ENCODE measurements at regions of chr5 and their contacts with region 1.

Region 1: GRCh38 chr5:36239370-36240293 is 2.1 kb downstream of the NADK2 start:
- DNase-seq: no peak
- H3K4me3 ChIP-seq: peak overlapping the region in 3 of 8 donors; percentile 58 to 80 (median 75)
- H3K27ac ChIP-seq: peak overlapping the region in 7 of 8 donors; percentile 47 to 98 (median 96)
- H3K4me1 ChIP-seq: peaks cover 13 to 62% (median 48%) of the 10 kb centered on the region in 6 donors
- H3K27me3 ChIP-seq: no peaks in the 10 kb centered on the region
- CTCF ChIP-seq: no peak
- POLR2A ChIP-seq: no peak

Region 2: DNA sequence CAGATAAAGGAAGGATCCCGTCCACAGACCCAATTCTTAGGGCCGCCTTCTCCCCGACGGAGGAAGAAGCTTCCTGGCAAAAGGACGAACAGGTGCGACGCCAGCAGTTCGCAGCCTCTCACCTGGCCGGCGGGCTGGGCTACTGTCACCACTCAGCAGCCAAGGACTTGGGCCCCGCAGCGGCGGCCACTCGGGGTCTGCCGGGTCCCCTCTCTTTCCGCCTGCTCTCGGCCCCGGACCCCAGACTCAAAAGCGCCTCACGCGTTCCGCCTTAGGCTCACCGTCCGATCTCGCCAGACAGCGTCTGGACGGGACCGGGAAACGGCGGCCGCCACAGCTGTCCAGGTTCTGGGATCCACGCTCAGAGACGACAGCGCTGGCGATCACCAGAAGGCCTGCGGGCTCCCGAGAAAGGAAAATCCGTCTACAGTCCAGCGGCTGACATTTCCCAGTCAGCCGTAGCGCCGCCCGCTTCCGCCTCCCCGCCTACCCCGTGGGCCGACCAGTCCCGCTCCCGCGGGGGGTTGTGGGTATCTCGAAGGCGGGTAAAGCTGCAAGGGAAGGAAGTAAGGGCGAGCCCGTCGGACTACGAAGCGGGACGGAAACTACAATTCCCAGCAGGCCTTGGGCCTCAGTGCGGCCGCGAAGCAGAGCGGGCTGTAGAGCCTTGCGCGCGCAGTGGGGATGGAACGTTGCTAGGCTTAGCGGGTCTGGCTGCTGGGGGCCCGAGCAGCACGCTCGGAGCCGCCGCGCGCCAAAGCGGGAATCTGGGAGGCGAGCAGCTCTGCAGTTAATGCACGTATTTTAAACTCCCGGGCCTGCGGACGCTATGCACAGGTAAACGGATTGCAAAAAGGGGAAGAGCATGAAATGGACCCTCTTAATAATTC is 88.0 kb before region 1 on chr5 and contains the starts of genes LMBRD2 and SKP2:
- intact Hi-C with region 1: loop called (anchors 10 kb)
- DNase-seq: peak; percentile 100
- H3K4me3 ChIP-seq: peak within 1 kb of the TSS; percentile 74 to 98 (median 87)
- H3K27ac ChIP-seq: peak within 1 kb of the TSS; percentile 73 to 90 (median 88)
- H3K4me1 ChIP-seq: peaks cover 17 to 91% (median 48%) of the 10 kb centered on the region in 6 donors
- H3K27me3 ChIP-seq: no peaks in the 10 kb centered on the region
- CTCF ChIP-seq: peak in 3 of 11 experiments; percentile 18 to 31 (median 30)
- POLR2A ChIP-seq: no peak
- total RNA-seq, gene LMBRD2: 11.5 to 19.5 (median 13.3) TPM
- total RNA-seq, gene SKP2: 14.8 to 23.6 (median 16.8) TPM